ENCODE measurements at regions of chr4 and their contacts with region 1.

Region 1: GRCh38 chr4:5998333-5998936 is 19.8 kb downstream of the C4orf50 start:
- DNase-seq: peak; percentile 59
- H3K4me3 Mint-ChIP-seq: no peak overlapping the region
- H3K27ac Mint-ChIP-seq: no peak overlapping the region
- H3K4me1 Mint-ChIP-seq: peaks cover 21% of the 10 kb centered on the region
- H3K27me3 Mint-ChIP-seq: peaks cover 5% of the 10 kb centered on the region

Region 2: GRCh38 chr4:5963611-5964010 is 34.8 kb before region 1 on chr4:
- CTCF ChIA-PET with region 1: interaction called, 16 read pairs
- POLR2A ChIA-PET with region 1: no interaction called
- DNase-seq: no peak
- H3K4me3 Mint-ChIP-seq: no peak overlapping the region
- H3K27ac Mint-ChIP-seq: no peak overlapping the region
- H3K4me1 Mint-ChIP-seq: no peaks in the 10 kb centered on the region
- H3K27me3 Mint-ChIP-seq: peaks cover 7% of the 10 kb centered on the region

Region 3: GRCh38 chr4:5979976-5980375 is 18.5 kb before region 1 on chr4:
- CTCF ChIA-PET with region 1: interaction called, 26 read pairs
- POLR2A ChIA-PET with region 1: no interaction called
- DNase-seq: no peak
- H3K4me3 Mint-ChIP-seq: no peak overlapping the region
- H3K27ac Mint-ChIP-seq: no peak overlapping the region
- H3K4me1 Mint-ChIP-seq: no peaks in the 10 kb centered on the region
- H3K27me3 Mint-ChIP-seq: peaks cover 19% of the 10 kb centered on the region

Region 4: GRCh38 chr4:5988086-5988845 is 10.2 kb before region 1 on chr4:
- CTCF ChIA-PET with region 1: interaction called, 26 read pairs
- POLR2A ChIA-PET with region 1: no interaction called
- DNase-seq: no peak
- H3K4me3 Mint-ChIP-seq: no peak overlapping the region
- H3K27ac Mint-ChIP-seq: no peak overlapping the region
- H3K4me1 Mint-ChIP-seq: no peaks in the 10 kb centered on the region
- H3K27me3 Mint-ChIP-seq: peaks cover 6% of the 10 kb centered on the region

Region 5: GRCh38 chr4:6008766-6009385 is 10.4 kb after region 1 on chr4:
- CTCF ChIA-PET with region 1: interaction called, 16 read pairs
- POLR2A ChIA-PET with region 1: no interaction called
- DNase-seq: no peak
- H3K4me3 Mint-ChIP-seq: no peak overlapping the region
- H3K27ac Mint-ChIP-seq: no peak overlapping the region
- H3K4me1 Mint-ChIP-seq: no peaks in the 10 kb centered on the region
- H3K27me3 Mint-ChIP-seq: peaks cover 26% of the 10 kb centered on the region

Region 6: GRCh38 chr4:6019316-6020263 is 21.2 kb after region 1 on chr4:
- CTCF ChIA-PET with region 1: interaction called, 19 read pairs
- POLR2A ChIA-PET with region 1: interaction called, 3 read pairs
- DNase-seq: peak; percentile 49
- H3K4me3 Mint-ChIP-seq: no peak overlapping the region
- H3K27ac Mint-ChIP-seq: no peak overlapping the region
- H3K4me1 Mint-ChIP-seq: no peaks in the 10 kb centered on the region
- H3K27me3 Mint-ChIP-seq: no peaks in the 10 kb centered on the region

Region 7: GRCh38 chr4:6076391-6076790 is 78.0 kb after region 1 on chr4:
- CTCF ChIA-PET with region 1: no interaction called
- POLR2A ChIA-PET with region 1: no interaction called
- DNase-seq: peak; percentile 24
- H3K4me3 Mint-ChIP-seq: no peak overlapping the region
- H3K27ac Mint-ChIP-seq: no peak overlapping the region
- H3K4me1 Mint-ChIP-seq: no peaks in the 10 kb centered on the region
- H3K27me3 Mint-ChIP-seq: no peaks in the 10 kb centered on the region